Endothelial cell of umbilical vein (primary cell): ENCODE measurements at regions of chr20 and their contacts with region 1.

Region 1: DNA sequence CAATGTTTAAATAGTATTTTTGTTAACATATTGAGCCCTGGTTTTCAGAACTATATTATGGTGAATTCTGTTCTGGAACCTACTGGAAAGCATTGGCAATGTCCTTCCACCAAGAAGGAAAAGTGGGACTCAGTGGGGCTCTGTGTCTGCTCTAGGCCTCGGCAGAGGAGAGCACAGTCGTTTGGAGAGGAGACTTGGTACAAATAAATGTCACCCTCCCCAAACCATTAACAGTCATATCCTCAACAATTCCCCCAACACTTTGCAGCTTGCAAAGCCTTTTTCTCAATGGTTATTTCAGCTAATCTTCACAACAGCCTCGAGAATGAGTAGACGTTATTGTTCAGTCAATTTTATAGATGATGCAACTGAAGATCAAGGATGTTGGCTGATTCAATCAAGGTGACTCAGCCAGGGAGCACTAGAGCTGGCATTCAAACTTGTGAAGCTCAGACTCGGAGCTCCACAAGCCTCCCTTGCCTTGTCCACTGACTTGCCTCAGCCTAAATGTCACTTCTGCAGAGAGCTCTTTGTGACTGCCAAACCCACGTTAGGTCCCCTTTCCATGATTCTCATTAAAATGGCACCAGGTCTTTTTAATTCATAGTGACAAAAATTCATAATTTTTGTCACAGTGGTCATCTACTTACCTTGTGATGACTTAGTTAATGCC is 60.6 kb downstream of the TOX2 start:
- DNase-seq: no peak
- H3K4me3 ChIP-seq: no peak overlapping the region
- H3K27ac ChIP-seq: no peak overlapping the region
- H3K4me1 ChIP-seq: no peaks in the 10 kb centered on the region
- H3K27me3 ChIP-seq: no peaks in the 10 kb centered on the region
- CTCF ChIP-seq: no peak
- POLR2A ChIP-seq: no peak

Region 2: GRCh38 chr20:43994486-43995100 is 19.4 kb after region 1 on chr20:
- CTCF ChIA-PET with region 1: no interaction called
- POLR2A ChIA-PET with region 1: no interaction called
- dilution Hi-C with region 1: no loop called
- intact Hi-C with region 1: no loop called
- DNase-seq: no peak
- H3K4me3 ChIP-seq: no peak overlapping the region
- H3K27ac ChIP-seq: no peak overlapping the region
- H3K4me1 ChIP-seq: no peaks in the 10 kb centered on the region
- H3K27me3 ChIP-seq: no peaks in the 10 kb centered on the region
- CTCF ChIP-seq: no peak
- POLR2A ChIP-seq: no peak

Region 3: DNA sequence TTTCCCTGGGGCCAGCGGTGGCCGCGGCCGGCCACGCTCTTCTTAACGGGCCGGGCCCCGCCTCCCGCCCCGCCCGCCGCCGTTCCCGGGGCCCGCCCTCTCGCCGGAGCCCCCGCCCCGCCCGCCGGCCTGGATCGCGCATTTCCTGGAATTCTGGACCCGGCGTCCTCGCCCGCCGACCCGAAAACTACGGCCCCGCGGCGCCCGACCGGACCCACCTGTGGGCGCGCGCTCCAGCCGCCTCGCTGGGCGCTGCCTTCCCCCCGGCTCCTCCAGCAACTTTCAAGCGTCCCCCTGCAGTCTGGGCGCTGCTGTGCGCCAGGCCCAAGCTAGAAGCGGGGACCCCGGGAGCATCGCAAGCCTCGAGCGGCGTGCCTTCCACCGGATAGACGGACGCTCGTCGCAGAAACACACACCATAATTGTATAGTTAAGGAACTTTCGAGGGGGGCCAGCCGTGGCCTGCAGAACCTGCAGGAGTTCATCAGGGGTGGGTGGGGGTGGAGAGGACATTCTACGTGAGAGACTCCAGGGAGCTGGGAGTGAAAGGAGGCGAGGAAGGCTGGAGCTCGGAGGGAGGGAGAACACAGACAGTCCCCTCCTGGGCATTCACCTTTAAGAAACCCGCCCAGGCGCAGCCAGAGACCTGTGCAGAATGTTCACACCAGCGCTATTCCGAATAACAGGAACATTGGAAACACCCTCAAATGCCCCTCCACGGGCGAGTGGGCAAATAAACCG is 676.6 kb after region 1 on chr20 and contains the start of gene ADA:
- CTCF ChIA-PET with region 1: no interaction called
- POLR2A ChIA-PET with region 1: interaction called, 10 read pairs
- dilution Hi-C with region 1: no loop called
- intact Hi-C with region 1: no loop called
- DNase-seq: peak; percentile 71
- H3K4me3 ChIP-seq: peak within 1 kb of the TSS; percentile 48 to 88 (median 51)
- H3K27ac ChIP-seq: no peak within 1 kb of the TSS
- H3K4me1 ChIP-seq: peaks cover 8% of the 10 kb centered on the region
- H3K27me3 ChIP-seq: peaks cover 16 to 19% of the 10 kb centered on the region in 2 experiments
- CTCF ChIP-seq: no peak
- POLR2A ChIP-seq: no peak
- total RNA-seq, gene ADA: 26.3 and 33.2 TPM in 2 replicates